PC-3 (cell line): ENCODE measurements at regions of chr3 and their contacts with region 1.

Region 1: GRCh38 chr3:94787734-94788270 is 724.9 kb downstream of the NSUN3 start:
- DNase-seq: peak; percentile 18
- ATAC-seq: peak; percentile 67
- H3K4me3 ChIP-seq: no peak overlapping the region
- H3K27ac ChIP-seq: no peak overlapping the region
- H3K4me1 ChIP-seq: no peaks in the 10 kb centered on the region; the same call in 1 of the 2 replicates
- H3K27me3 ChIP-seq: no peaks in the 10 kb centered on the region
- CTCF ChIP-seq: no peak

Region 2: GRCh38 chr3:94735354-94735753 is 52.4 kb before region 1 on chr3:
- CTCF ChIA-PET with region 1: no interaction called
- POLR2A ChIA-PET with region 1: no interaction called
- intact Hi-C with region 1: loop called (anchors 10 kb)
- DNase-seq: peak; percentile 72
- ATAC-seq: peak; percentile 88
- H3K4me3 ChIP-seq: no peak overlapping the region
- H3K27ac ChIP-seq: no peak overlapping the region
- H3K4me1 ChIP-seq: peaks cover 15% of the 10 kb centered on the region
- H3K27me3 ChIP-seq: no peaks in the 10 kb centered on the region
- CTCF ChIP-seq: no peak

Region 3: DNA sequence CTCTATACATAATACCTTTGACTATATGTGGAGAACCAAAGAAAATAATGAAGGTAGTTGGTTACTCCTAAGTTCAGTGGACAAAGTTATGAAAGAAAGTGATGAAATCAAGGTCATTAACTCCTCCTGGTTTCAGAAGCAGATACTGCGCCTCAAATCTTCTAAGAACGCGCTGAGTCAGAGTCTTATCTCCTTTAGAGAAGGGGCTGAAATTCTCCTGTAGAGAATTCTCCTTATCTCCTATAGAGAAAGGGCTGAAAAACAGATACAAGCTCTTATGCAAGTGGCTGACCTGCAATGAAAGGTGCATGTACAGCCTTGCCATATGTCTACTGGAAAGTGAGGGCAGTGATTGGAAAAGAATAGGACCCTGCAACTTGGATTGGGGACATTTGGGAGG is 99.3 kb after region 1 on chr3:
- CTCF ChIA-PET with region 1: no interaction called
- POLR2A ChIA-PET with region 1: no interaction called
- intact Hi-C with region 1: no loop called
- DNase-seq: no peak
- ATAC-seq: no peak
- H3K4me3 ChIP-seq: no peak overlapping the region
- H3K27ac ChIP-seq: no peak overlapping the region
- H3K4me1 ChIP-seq: no peaks in the 10 kb centered on the region
- H3K27me3 ChIP-seq: no peaks in the 10 kb centered on the region
- CTCF ChIP-seq: no peak